Activated T-helper 2 cell treated with anti-CD3 and anti-CD28 coated beads, Interferon-gamma antibody, Interleukin-2, Interleukin-4, amounts not matched to agents 10 μg/mL and 5 μg/mL and 100 μg/mL, durations not matched to agents 14 hours and 24 hours and 36 hours (primary cell): ENCODE measurements at regions of chr10 and their contacts with region 1.

Region 1: DNA sequence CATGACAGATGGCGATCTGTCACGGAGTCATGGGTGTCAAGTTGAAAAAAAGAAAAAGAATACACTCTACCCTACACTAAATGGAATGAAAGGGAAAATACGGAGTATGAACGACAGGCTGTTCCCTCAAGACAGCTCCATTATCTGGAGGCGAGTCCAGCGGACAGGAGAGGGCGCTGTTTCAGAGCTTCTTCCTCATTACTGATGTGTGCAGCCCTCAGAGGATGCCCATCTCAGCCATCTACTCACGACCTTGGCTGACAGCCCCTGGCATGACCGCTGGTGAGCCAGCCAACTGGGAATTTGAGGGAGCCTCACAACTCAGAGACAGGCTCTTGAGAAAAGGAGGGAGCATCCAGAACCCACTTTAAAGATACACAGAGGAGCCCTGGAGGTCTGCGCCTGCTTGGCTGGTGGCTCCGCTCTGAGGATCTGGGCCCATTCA is 49.6 kb upstream of the SMNDC1 start:
- DNase-seq: peak; percentile 66
- H3K4me3 Mint-ChIP-seq: peak overlapping the region; percentile 60
- H3K27ac Mint-ChIP-seq: peak overlapping the region; percentile 98
- H3K4me1 Mint-ChIP-seq: peaks cover 72% of the 10 kb centered on the region
- H3K27me3 Mint-ChIP-seq: no peaks in the 10 kb centered on the region

Region 2: DNA sequence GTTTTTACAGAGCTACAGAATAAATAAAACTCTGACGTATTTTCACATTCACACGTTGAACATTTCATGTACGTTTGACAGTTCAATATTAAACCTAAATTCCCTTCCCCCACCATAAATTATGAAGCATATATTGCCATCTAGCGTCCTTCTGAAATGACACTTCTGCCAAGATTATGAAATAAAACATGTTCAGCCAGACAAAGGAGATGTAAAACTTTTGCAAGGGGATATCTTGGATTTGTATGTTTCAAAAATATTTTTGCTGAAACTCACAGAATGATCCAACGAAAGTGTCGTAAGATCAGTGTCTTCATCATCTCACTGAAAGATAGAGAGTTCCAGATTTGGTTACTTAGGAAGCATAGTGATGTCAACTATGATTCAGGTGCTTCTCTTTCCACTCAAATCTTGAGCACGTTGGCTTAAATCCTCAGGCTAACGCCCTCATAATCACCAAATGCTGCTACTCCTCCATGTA is 1335.4 kb before region 1 on chr10:
- intact Hi-C with region 1: no loop called
- DNase-seq: no peak
- H3K4me3 Mint-ChIP-seq: no peak overlapping the region
- H3K27ac Mint-ChIP-seq: no peak overlapping the region
- H3K4me1 Mint-ChIP-seq: no peaks in the 10 kb centered on the region
- H3K27me3 Mint-ChIP-seq: no peaks in the 10 kb centered on the region

Region 3: DNA sequence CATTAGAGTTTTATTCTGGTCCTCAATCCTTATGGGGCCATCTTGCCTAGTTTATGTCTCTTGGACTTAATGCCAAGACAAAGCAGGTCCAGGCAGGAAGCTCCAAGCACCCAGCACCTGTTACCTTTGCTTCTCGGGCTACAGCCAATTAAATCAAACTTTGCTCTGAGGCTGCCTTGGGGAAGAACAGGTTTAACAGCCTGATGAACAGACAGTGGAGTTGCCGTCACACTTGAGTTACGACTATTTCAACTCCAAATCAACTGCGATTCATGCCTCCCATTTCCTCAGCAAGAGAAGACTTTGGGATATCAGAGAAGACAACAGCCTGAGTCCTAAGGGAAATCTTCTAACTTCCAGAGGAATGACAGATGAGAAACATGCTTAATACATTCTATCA is 493.3 kb before region 1 on chr10:
- intact Hi-C with region 1: no loop called
- DNase-seq: no peak
- H3K4me3 Mint-ChIP-seq: no peak overlapping the region
- H3K27ac Mint-ChIP-seq: no peak overlapping the region
- H3K4me1 Mint-ChIP-seq: peaks cover 10% of the 10 kb centered on the region
- H3K27me3 Mint-ChIP-seq: no peaks in the 10 kb centered on the region

Region 4: DNA sequence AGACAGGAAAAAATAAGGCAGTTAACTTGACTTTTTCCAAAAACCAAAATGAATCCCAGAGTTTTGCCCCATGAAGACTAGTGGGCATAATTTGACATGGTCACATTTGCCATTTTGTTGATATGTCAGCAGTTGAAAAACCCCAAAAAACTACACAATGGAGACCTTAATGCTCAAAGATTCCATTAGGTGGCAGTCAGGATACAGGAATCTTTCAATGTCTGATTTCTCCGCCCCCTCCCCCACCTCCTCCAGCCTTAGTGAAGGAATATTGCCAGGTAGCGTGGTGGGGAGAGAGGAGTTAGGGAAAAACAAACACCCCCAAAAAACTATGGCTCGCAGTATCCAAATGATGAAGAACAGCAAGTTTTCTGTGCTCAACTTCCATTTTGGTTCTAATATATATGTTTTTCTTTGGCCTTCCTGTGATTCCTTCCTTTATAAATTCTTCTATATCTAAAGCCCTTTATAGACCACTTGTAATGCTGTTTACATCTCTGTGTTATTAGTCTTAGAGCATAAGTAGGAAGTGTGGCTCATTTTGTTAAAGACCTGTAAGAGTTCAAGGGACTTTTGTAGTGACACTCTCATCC is 42.9 kb before region 1 on chr10:
- intact Hi-C with region 1: loop called (anchors 1 kb)
- DNase-seq: no peak
- H3K4me3 Mint-ChIP-seq: no peak overlapping the region
- H3K27ac Mint-ChIP-seq: no peak overlapping the region
- H3K4me1 Mint-ChIP-seq: peaks cover 33% of the 10 kb centered on the region
- H3K27me3 Mint-ChIP-seq: no peaks in the 10 kb centered on the region

Region 5: GRCh38 chr10:110370006-110370405 is 15.7 kb after region 1 on chr10:
- intact Hi-C with region 1: no loop called
- DNase-seq: no peak
- H3K4me3 Mint-ChIP-seq: no peak overlapping the region
- H3K27ac Mint-ChIP-seq: no peak overlapping the region
- H3K4me1 Mint-ChIP-seq: peaks cover 58% of the 10 kb centered on the region
- H3K27me3 Mint-ChIP-seq: no peaks in the 10 kb centered on the region

Region 6: GRCh38 chr10:110395725-110396651 is 41.6 kb after region 1 on chr10:
- intact Hi-C with region 1: loop called (anchors 2 kb)
- DNase-seq: no peak
- H3K4me3 Mint-ChIP-seq: no peak overlapping the region
- H3K27ac Mint-ChIP-seq: peak overlapping the region; percentile 78
- H3K4me1 Mint-ChIP-seq: peaks cover 56% of the 10 kb centered on the region
- H3K27me3 Mint-ChIP-seq: no peaks in the 10 kb centered on the region

Region 7: DNA sequence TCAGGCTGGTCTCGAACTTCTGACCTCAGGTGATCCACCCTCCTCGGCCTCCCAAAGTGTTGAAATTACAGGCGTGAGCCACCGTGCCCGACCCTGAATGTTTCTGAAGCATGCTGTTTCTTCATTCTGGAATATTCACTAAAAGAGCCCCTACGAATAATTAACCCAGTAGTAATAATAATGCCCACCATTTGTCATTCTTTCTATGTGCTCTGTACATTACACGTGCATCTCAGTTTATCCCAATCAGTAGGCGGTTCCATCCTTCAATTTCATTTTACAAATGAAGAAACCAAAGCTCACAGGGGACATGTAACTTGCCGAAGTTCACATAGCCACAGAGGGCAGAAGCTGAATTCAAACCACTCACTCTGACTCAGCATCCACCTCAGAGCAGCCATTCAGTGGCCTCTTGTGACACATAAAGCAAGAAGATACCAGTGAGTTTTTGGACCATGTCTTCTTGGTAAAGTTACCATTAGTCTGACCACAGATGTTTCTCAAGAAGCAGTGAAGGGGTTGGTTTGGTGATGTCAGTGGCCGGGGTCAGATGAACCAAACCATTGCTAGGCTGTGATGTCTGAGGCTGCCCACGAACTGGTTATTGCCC is 71.4 kb after region 1 on chr10:
- intact Hi-C with region 1: loop called (anchors 1 kb)
- DNase-seq: peak; percentile 34
- H3K4me3 Mint-ChIP-seq: peak overlapping the region; percentile 28
- H3K27ac Mint-ChIP-seq: peak overlapping the region; percentile 85
- H3K4me1 Mint-ChIP-seq: peaks cover 60% of the 10 kb centered on the region
- H3K27me3 Mint-ChIP-seq: no peaks in the 10 kb centered on the region

Region 8: DNA sequence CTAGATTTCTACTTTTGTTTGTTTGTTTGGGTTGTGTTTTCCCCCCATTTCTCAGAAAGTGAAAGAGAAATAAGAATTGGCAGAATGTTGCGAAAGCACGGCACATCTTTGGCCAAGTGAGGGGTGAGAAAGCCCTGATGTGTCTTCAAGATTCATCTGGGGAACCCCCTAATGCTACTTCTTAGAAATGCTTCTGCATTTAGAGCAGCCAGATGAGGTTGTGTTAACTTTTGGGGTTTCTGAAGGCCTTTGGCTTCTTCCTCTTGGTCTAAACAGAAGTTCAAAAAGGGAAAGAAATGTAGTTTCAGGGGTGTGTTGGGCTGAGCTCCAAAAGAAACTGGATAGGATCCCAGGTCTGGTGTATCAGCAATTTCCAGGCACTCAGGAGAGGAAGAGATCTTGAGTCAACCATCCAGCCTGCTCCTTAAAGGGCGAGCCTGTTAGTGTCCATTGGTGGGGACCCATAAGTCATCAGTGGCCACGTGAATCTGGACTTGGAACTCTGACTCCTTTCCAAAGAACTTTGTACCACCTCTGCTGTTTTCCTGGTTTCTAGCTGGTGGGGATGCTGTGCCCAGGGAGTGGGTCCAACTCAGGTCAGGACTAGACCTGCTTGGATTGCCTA is 149.9 kb after region 1 on chr10:
- intact Hi-C with region 1: loop called (anchors 1 kb)
- DNase-seq: peak; percentile 70
- H3K4me3 Mint-ChIP-seq: peak overlapping the region; percentile 96
- H3K27ac Mint-ChIP-seq: peak overlapping the region; percentile 81
- H3K4me1 Mint-ChIP-seq: peaks cover 86% of the 10 kb centered on the region
- H3K27me3 Mint-ChIP-seq: no peaks in the 10 kb centered on the region

Region 9: DNA sequence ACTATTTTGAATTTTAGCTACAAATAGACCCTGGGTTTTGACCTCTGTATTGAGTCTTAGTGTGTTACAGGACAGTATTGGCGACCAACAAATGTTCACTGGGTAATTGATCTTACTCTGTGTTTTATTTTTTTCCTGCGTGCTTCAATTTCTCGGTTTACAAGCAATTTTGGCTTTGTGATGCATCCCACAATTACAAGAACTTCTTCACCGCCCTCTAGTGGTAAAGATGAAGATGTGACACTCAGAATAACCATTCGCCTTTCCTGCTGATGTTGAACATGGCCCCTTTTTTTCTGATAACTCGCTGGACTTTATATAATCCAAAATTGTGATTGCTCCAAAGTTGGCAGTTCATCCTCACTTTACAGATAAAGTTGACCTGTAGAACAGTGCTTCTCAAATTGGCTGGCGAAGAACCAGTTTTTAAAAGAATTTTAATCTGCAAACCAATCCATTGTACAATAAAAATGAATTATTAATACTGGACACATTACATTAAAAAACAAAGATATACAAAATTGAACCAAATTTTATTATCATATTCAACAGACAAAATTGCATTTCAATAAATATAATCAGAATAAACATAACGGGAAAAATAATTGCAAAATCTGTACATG is 192.9 kb after region 1 on chr10:
- intact Hi-C with region 1: loop called (anchors 1 kb)
- DNase-seq: no peak
- H3K4me3 Mint-ChIP-seq: no peak overlapping the region
- H3K27ac Mint-ChIP-seq: no peak overlapping the region
- H3K4me1 Mint-ChIP-seq: peaks cover 12% of the 10 kb centered on the region
- H3K27me3 Mint-ChIP-seq: peaks cover 28% of the 10 kb centered on the region